Heart right ventricle (tissue), 16 donors: ENCODE measurements at regions of chr7 and their contacts with region 1.

Region 1: GRCh38 chr7:137091396-137091795 is 222.9 kb downstream of the CHRM2 start:
- DNase-seq: no peak
- ATAC-seq: peak; percentile 46 to 89 (median 68)
- H3K4me3 ChIP-seq: no peak overlapping the region
- H3K27ac ChIP-seq: no peak overlapping the region
- H3K4me1 ChIP-seq: no peaks in the 10 kb centered on the region
- H3K27me3 ChIP-seq: no peaks in the 10 kb centered on the region
- CTCF ChIP-seq: peak in 6 of 9 donors; percentile 21 to 53 (median 44)

Region 2: DNA sequence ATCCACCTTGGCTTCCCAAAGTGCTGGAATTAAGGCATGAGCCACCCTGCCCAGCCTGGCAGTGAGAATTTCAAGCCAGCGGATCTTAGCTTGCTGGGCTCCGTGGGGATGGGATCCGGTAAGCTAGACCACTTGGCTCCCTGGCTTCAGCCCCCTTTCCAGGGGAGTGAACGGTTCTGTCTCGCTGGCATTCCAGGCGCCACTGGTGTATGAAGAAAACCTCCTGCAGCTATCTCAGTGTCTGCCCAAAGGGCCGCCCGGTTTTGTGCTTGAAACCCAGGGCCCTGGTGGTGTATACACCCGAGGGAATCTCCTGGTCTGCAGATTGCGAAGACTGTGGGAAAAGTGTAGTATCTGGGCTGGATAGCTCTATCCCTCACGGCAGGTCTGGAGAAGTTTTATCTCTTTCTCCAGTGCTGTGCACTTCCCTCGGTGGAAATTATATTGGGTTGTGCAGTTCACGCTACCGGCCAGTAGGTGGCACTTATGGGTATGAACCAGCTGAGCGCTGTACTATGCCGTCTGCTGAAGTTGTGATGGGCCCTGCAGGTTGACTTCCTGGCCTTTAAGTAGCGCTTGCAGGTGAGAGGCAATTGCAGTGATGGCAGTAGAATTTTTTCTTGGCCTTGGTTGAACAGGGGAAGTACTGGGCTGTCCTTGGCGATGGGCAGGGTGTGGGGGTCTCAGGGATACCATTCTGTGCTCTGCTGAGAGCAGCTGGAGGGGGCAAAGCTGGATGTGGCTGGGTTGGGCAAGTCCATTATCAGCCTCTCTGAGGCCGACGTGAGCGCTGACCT is 976.2 kb before region 1 on chr7:
- intact Hi-C with region 1: loop called in 1 of 10 experiments (anchors 10 kb)
- DNase-seq: peak; percentile 17 to 28
- ATAC-seq: peak in 7 of 8 donors; percentile 51 to 79 (median 77)
- H3K4me3 ChIP-seq: no peak overlapping the region
- H3K27ac ChIP-seq: no peak overlapping the region
- H3K4me1 ChIP-seq: no peaks in the 10 kb centered on the region
- H3K27me3 ChIP-seq: no peaks in the 10 kb centered on the region
- CTCF ChIP-seq: peak; percentile 45 to 77 (median 69)

Region 3: DNA sequence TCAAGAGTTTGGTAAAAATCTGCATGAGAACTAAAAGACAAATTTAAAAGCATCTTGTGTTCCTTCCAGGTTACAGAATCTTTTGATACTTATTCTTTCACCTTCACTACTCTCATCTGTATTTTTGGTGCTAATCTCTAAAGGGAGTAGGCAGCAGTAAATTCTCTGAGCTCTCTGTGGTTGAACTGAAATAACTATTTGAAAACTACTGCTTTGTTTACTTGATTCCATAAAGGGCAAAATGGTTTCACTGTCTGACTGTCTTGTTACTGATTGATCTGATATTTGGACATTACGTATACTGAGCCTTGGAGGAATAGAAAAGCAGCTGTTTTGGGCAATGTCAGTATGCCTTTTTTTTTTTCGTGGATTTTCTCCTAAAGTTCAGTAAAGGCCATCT is 119.6 kb before region 1 on chr7:
- intact Hi-C with region 1: no loop called
- DNase-seq: no peak
- ATAC-seq: no peak
- H3K4me3 ChIP-seq: no peak overlapping the region
- H3K27ac ChIP-seq: no peak overlapping the region
- H3K4me1 ChIP-seq: peaks cover 0 to 12% (median 0%) of the 10 kb centered on the region in 9 donors
- H3K27me3 ChIP-seq: no peaks in the 10 kb centered on the region
- CTCF ChIP-seq: no peak

Region 4: DNA sequence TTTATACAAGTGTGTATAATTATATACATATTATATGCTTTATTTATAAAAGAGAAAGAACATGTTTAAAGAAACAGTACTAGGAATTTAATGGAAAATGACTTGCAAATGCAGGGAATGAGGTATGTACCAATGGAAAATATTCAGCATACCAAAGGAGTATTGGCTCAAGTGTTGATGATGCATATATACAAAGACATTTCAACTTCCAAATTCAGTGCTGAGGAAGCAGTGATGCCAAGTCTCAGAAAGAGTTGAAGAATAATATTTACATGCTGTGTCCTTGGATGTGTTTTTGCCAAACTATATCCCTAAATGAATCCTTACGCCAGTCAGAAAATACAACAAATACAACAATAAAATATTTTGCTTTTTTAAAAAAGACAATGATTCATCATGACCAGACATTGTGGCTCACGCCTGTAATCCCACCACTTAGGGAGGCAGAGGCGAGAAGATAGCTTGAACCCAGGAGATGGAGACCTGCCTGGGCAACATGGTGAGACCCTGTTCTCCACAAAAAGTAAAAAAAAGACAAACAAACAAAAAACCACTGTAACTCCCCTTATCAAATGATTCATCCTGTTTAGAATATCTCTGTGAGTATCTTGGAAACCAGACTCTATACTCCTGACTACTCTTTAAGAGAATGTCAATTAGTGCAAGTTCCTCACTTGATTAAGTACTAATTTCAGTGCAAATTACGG is 65.8 kb before region 1 on chr7:
- intact Hi-C with region 1: no loop called
- DNase-seq: no peak
- ATAC-seq: no peak
- H3K4me3 ChIP-seq: no peak overlapping the region
- H3K27ac ChIP-seq: no peak overlapping the region
- H3K4me1 ChIP-seq: peaks cover 0 to 13% (median 6%) of the 10 kb centered on the region in 9 donors
- H3K27me3 ChIP-seq: no peaks in the 10 kb centered on the region
- CTCF ChIP-seq: no peak

Region 5: GRCh38 chr7:137036768-137037167 is 54.6 kb before region 1 on chr7:
- intact Hi-C with region 1: no loop called
- DNase-seq: no peak
- ATAC-seq: no peak
- H3K4me3 ChIP-seq: no peak overlapping the region
- H3K27ac ChIP-seq: no peak overlapping the region
- H3K4me1 ChIP-seq: no peaks in the 10 kb centered on the region
- H3K27me3 ChIP-seq: no peaks in the 10 kb centered on the region
- CTCF ChIP-seq: no peak